PC-3 (cell line): ENCODE measurements at regions of chr9 and their contacts with region 1.

Region 1: GRCh38 chr9:6584881-6585597 is 60.5 kb downstream of the GLDC start:
- DNase-seq: peak; percentile 63
- ATAC-seq: no peak
- H3K4me3 ChIP-seq: no peak overlapping the region
- H3K27ac ChIP-seq: no peak overlapping the region
- H3K4me1 ChIP-seq: no peaks in the 10 kb centered on the region
- H3K27me3 ChIP-seq: no peaks in the 10 kb centered on the region
- CTCF ChIP-seq: peak; percentile 64

Region 2: GRCh38 chr9:6667633-6668280 is 82.7 kb after region 1 on chr9:
- CTCF ChIA-PET with region 1: interaction called, 4 read pairs
- POLR2A ChIA-PET with region 1: interaction called, 6 read pairs
- intact Hi-C with region 1: loop called (anchors 1 kb)
- DNase-seq: peak; percentile 26
- ATAC-seq: peak; percentile 45; the same call in 1 of the 2 replicates
- H3K4me3 ChIP-seq: no peak overlapping the region
- H3K27ac ChIP-seq: no peak overlapping the region
- H3K4me1 ChIP-seq: no peaks in the 10 kb centered on the region
- H3K27me3 ChIP-seq: no peaks in the 10 kb centered on the region
- CTCF ChIP-seq: peak; percentile 70

Region 3: DNA sequence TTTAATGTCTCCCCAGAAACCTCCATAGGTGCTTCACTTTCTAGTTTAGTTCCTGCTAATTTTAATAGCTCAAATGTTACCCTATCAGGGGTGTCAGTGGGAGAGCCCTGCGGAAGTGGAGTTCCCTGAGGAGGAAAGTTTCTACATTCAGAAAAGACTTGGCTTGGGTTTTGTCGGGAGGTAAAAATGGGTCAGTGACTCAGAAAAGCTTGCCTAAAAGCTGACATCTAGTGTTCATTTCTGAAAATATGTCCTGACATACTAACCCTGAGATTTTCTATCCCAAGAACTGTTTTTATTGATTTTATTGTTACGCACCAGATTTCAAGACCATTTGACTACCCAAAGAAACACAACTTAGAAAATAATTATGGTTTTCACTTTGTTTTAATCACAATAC is 101.4 kb after region 1 on chr9:
- CTCF ChIA-PET with region 1: interaction called, 4 read pairs
- POLR2A ChIA-PET with region 1: no interaction called
- intact Hi-C with region 1: loop called (anchors 1 kb)
- DNase-seq: peak; percentile 40
- ATAC-seq: no peak
- H3K4me3 ChIP-seq: no peak overlapping the region
- H3K27ac ChIP-seq: no peak overlapping the region
- H3K4me1 ChIP-seq: peaks cover 7% of the 10 kb centered on the region; the same call in 1 of the 2 replicates
- H3K27me3 ChIP-seq: no peaks in the 10 kb centered on the region
- CTCF ChIP-seq: peak; percentile 50